Transverse colon (tissue), 4 donors: ENCODE measurements at regions of chr18 and their contacts with region 1.

Region 1: GRCh38 chr18:47730795-47731194 is 199.7 kb downstream of the SMAD2 start:
- DNase-seq: no peak
- H3K4me3 ChIP-seq: no peak overlapping the region
- H3K27ac ChIP-seq: no peak overlapping the region
- H3K4me1 ChIP-seq: no peaks in the 10 kb centered on the region
- H3K27me3 ChIP-seq: no peaks in the 10 kb centered on the region
- CTCF ChIP-seq: no peak
- EP300 ChIP-seq: no peak
- POLR2A ChIP-seq: no peak

Region 2: DNA sequence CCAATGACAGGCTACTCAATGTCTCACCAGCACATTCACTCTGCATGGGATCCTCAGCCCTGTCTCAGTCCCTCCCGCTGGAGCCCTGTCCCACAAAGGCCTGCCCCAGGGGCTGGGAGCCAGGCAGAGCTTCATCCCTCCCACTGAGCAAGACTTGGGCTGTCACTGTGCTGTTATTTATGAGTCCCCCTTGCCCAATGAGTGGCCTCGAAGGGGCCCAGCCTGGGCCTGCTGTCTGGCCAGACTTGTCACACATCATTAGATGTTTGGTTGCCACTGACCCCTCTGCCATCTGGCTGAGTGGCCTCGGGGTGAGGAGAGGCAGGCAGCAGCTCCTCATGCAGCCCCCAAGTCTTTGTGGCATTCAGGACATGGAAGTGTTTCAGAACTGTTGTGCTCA is 148.7 kb before region 1 on chr18:
- in situ Hi-C with region 1: no loop called
- intact Hi-C with region 1: no loop called
- DNase-seq: no peak
- H3K4me3 ChIP-seq: no peak overlapping the region
- H3K27ac ChIP-seq: no peak overlapping the region
- H3K4me1 ChIP-seq: no peaks in the 10 kb centered on the region
- H3K27me3 ChIP-seq: no peaks in the 10 kb centered on the region
- CTCF ChIP-seq: no peak
- EP300 ChIP-seq: no peak
- POLR2A ChIP-seq: no peak

Region 3: DNA sequence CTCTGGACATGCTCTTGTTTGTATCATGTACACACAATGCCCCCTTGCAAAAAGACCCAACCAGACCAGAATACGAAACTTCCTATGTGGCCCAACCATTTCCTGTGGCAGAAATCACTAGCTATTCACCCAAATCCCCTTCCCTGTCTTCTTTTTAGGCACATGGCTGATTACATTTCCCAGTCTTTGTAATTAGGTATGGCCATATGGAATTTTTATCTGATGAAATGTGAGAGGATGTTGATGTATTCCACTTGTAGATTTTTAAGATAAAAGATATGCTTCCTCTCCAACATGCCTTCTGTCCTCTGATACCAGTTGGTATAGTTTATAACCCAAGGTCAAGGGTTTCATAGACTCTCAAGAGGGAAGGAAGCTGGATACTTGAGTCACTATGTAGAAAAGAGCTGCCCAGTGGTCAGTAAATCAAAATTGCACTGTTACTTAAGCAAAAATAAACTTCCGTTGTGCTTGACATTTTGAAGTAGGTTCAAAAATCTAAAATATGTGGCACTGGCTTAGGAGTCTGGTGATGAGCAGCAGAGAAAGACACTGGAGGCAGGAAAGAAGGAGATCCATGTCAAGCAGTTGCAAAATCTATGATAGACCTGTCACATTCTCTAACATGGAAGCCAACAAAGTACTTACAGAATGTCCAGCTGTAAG is 97.7 kb before region 1 on chr18:
- in situ Hi-C with region 1: no loop called
- intact Hi-C with region 1: no loop called
- DNase-seq: no peak
- H3K4me3 ChIP-seq: no peak overlapping the region
- H3K27ac ChIP-seq: no peak overlapping the region
- H3K4me1 ChIP-seq: no peaks in the 10 kb centered on the region
- H3K27me3 ChIP-seq: no peaks in the 10 kb centered on the region
- CTCF ChIP-seq: no peak
- EP300 ChIP-seq: no peak
- POLR2A ChIP-seq: no peak

Region 4: GRCh38 chr18:47809420-47809819 is 78.6 kb after region 1 on chr18:
- in situ Hi-C with region 1: no loop called
- intact Hi-C with region 1: loop called (anchors 2 kb)
- DNase-seq: no peak
- H3K4me3 ChIP-seq: no peak overlapping the region
- H3K27ac ChIP-seq: no peak overlapping the region
- H3K4me1 ChIP-seq: no peaks in the 10 kb centered on the region
- H3K27me3 ChIP-seq: no peaks in the 10 kb centered on the region
- CTCF ChIP-seq: no peak
- EP300 ChIP-seq: no peak
- POLR2A ChIP-seq: no peak